Activated naive CD4-positive, alpha-beta T cell treated with anti-CD3 and anti-CD28 coated beads, Interleukin-2, amount 10 ng/mL, durations not matched to agents 7 days and 5 days (primary cell): ENCODE measurements at regions of chr16 and their contacts with region 1.

Region 1: DNA sequence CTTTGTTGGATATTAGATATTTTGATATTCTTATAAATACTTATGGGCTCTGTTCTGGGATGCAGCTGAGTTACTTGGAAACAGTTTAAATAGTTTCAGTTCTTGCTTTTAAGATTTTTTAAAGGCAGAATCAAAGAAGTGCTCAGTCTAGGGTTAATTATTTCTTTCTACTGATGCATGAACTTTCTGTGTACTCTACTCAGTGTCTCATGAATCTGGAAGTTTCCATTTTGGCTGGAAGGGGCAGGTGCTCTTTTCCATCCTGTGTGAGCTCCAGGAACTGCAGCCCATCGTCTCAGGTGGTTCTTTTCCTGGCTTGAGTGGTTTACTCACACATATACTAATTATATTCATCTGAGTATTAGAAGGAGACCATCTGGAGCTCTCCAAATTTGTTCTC is 61.1 kb upstream of the CPHXL start:
- DNase-seq: no peak
- H3K4me3 Mint-ChIP-seq: no peak overlapping the region
- H3K27ac Mint-ChIP-seq: no peak overlapping the region
- H3K4me1 Mint-ChIP-seq: no peaks in the 10 kb centered on the region
- H3K27me3 Mint-ChIP-seq: peaks cover 14% of the 10 kb centered on the region

Region 2: GRCh38 chr16:75841517-75841916 is 54.1 kb after region 1 on chr16:
- CTCF ChIA-PET with region 1: no interaction called
- DNase-seq: no peak
- H3K4me3 Mint-ChIP-seq: no peak overlapping the region
- H3K27ac Mint-ChIP-seq: no peak overlapping the region
- H3K4me1 Mint-ChIP-seq: no peaks in the 10 kb centered on the region
- H3K27me3 Mint-ChIP-seq: no peaks in the 10 kb centered on the region

Region 3: GRCh38 chr16:77171745-77172635 is 1384.5 kb after region 1 on chr16:
- CTCF ChIA-PET with region 1: interaction called, 13 read pairs
- DNase-seq: peak; percentile 28
- H3K4me3 Mint-ChIP-seq: no peak overlapping the region
- H3K27ac Mint-ChIP-seq: no peak overlapping the region
- H3K4me1 Mint-ChIP-seq: no peaks in the 10 kb centered on the region
- H3K27me3 Mint-ChIP-seq: peaks cover 25% of the 10 kb centered on the region